Endothelial cell of umbilical vein (primary cell): ENCODE measurements at regions of chr9 and their contacts with region 1.

Region 1: GRCh38 chr9:81521892-81522291 is 167.5 kb downstream of the TLE1 start:
- DNase-seq: no peak
- H3K4me3 ChIP-seq: no peak overlapping the region
- H3K27ac ChIP-seq: no peak overlapping the region
- H3K4me1 ChIP-seq: peaks cover 8% of the 10 kb centered on the region
- H3K27me3 ChIP-seq: no peaks in the 10 kb centered on the region
- CTCF ChIP-seq: no peak
- POLR2A ChIP-seq: no peak

Region 2: GRCh38 chr9:81312337-81312736 is 209.6 kb before region 1 on chr9:
- CTCF ChIA-PET with region 1: interaction called, 13 read pairs
- POLR2A ChIA-PET with region 1: no interaction called
- dilution Hi-C with region 1: no loop called
- intact Hi-C with region 1: no loop called
- DNase-seq: peak; percentile 32
- H3K4me3 ChIP-seq: no peak overlapping the region
- H3K27ac ChIP-seq: no peak overlapping the region
- H3K4me1 ChIP-seq: no peaks in the 10 kb centered on the region
- H3K27me3 ChIP-seq: no peaks in the 10 kb centered on the region
- CTCF ChIP-seq: peak in 1 of 2 donors; percentile 9
- POLR2A ChIP-seq: no peak

Region 3: GRCh38 chr9:81540142-81540710 is 18.3 kb after region 1 on chr9:
- CTCF ChIA-PET with region 1: interaction called, 10 read pairs
- POLR2A ChIA-PET with region 1: no interaction called
- dilution Hi-C with region 1: no loop called
- intact Hi-C with region 1: no loop called
- DNase-seq: no peak
- H3K4me3 ChIP-seq: no peak overlapping the region
- H3K27ac ChIP-seq: no peak overlapping the region
- H3K4me1 ChIP-seq: peaks cover 8% of the 10 kb centered on the region
- H3K27me3 ChIP-seq: no peaks in the 10 kb centered on the region
- CTCF ChIP-seq: no peak
- POLR2A ChIP-seq: no peak

Region 4: DNA sequence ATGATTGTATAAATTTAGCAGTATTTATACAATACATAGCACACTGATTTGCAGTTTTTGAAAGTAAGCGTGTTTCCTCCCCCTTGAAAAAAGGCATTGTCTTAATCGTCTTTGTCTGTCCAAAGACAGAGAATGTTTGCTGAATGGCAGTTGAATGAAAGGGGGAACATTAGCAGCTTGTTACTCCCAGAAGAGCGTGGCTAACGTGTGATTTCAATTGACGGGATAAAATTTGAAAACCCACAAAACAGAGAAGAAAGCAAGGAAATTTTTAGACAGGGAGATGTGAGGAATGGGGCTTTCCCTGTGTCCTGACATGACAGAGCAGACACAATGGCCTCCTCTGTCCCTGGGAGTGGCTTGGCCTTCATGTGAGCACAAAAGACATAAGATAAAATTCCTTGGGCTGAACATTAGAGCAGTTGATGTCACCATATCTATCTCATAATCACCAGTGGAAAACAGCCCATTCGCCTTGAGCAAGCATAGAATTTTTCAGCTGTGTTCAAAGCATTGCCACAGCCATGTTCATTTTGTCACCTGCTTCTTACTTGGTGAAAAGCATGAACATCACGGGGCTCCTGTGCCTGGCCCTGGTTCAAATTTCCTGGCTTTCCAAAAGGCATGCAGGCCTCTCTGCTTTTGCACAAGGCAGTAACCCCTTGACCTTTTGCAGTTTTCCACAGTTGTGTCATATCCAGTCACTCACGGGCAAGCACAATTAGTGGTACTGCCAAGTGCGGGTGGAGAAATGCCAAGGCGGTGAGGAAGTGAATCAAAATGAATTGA is 40.5 kb after region 1 on chr9:
- CTCF ChIA-PET with region 1: interaction called, 5 read pairs
- POLR2A ChIA-PET with region 1: no interaction called
- dilution Hi-C with region 1: no loop called
- intact Hi-C with region 1: loop called (anchors 2 kb)
- DNase-seq: peak; percentile 91
- H3K4me3 ChIP-seq: no peak overlapping the region
- H3K27ac ChIP-seq: peak overlapping the region; percentile 66
- H3K4me1 ChIP-seq: peaks cover 28% of the 10 kb centered on the region
- H3K27me3 ChIP-seq: no peaks in the 10 kb centered on the region
- CTCF ChIP-seq: no peak
- POLR2A ChIP-seq: no peak

Region 5: GRCh38 chr9:81619348-81620001 is 97.6 kb after region 1 on chr9:
- CTCF ChIA-PET with region 1: interaction called, 21 read pairs
- POLR2A ChIA-PET with region 1: no interaction called
- dilution Hi-C with region 1: no loop called
- intact Hi-C with region 1: no loop called
- DNase-seq: no peak
- H3K4me3 ChIP-seq: no peak overlapping the region
- H3K27ac ChIP-seq: no peak overlapping the region
- H3K4me1 ChIP-seq: peaks cover 11% of the 10 kb centered on the region
- H3K27me3 ChIP-seq: no peaks in the 10 kb centered on the region
- CTCF ChIP-seq: no peak
- POLR2A ChIP-seq: no peak

Region 6: DNA sequence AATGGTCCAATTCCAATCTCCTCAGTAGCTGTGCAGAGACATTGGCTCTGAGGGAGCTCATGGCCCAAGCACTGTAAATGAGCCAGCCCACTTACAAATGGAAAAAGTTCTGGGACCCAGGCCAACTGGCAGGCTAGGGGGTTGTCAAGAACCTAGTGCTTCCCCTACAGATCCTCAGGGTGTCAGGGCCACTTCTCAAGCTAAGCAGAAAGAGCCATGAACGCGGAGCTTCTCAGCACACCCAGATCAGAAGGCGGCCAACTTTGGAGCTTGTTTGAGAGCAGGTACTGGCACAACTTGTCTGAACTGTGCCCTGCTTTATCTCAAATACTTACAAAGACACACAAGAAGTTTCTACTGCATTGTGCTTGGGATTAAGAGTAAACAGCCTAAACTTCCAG is 150.0 kb after region 1 on chr9:
- CTCF ChIA-PET with region 1: interaction called, 13 read pairs
- POLR2A ChIA-PET with region 1: no interaction called
- dilution Hi-C with region 1: no loop called
- intact Hi-C with region 1: no loop called
- DNase-seq: peak; percentile 69
- H3K4me3 ChIP-seq: no peak overlapping the region
- H3K27ac ChIP-seq: no peak overlapping the region
- H3K4me1 ChIP-seq: peaks cover 7% of the 10 kb centered on the region
- H3K27me3 ChIP-seq: no peaks in the 10 kb centered on the region
- CTCF ChIP-seq: no peak
- POLR2A ChIP-seq: no peak

Region 7: GRCh38 chr9:82421498-82421897 is 899.6 kb after region 1 on chr9:
- CTCF ChIA-PET with region 1: no interaction called
- POLR2A ChIA-PET with region 1: no interaction called
- dilution Hi-C with region 1: no loop called
- intact Hi-C with region 1: no loop called
- DNase-seq: no peak
- H3K4me3 ChIP-seq: no peak overlapping the region
- H3K27ac ChIP-seq: no peak overlapping the region
- H3K4me1 ChIP-seq: no peaks in the 10 kb centered on the region
- H3K27me3 ChIP-seq: no peaks in the 10 kb centered on the region
- CTCF ChIP-seq: no peak
- POLR2A ChIP-seq: no peak